Activated CD4-positive, alpha-beta T cell treated with anti-CD3 and anti-CD28 coated beads for 36 hours (primary cell): ENCODE measurements at regions of chr17 and their contacts with region 1.

Region 1: DNA sequence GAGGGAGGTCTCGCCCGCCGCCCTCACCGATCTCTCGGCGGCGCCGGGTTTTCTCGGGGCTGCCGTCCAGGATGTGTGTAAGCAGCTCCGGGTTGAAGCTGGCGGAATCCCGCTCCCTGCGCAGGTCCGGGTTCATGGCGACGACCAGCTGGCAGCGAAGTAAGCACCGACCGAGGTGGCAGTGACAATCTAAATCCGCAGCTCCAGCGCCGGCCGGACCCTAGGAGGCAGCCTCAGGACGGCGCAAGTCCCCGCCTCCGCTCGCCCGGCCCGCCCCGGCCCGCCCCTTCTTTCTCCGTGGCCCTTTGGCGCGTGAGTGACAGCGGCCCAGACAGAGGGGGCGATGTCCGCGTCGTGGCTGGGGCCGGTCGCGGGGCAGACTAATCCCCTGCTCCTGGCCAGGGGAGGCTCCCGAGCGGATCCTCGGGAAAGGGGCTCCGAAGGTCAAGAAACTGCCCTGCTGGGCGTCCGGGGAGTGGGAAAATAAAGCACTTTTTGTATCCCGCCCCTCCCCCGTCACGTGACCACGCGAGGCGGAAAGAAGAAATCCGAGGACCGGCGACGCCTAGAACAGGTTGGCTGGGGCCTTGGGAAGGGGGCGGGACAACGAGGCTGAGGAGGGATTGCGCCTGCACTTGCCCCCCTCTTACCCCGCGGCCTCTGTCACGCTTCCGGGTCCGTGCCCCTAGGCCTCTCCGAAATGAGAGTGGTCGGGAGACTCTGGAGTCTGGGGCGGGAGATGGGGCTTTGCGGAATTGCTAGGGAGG is at the starts of genes ACOX1 and TEN1:
- DNase-seq: peak; percentile 98
- ATAC-seq: peak; percentile 96
- H3K4me3 Mint-ChIP-seq: peak within 1 kb of the TSS; percentile 89
- H3K27ac Mint-ChIP-seq: peak within 1 kb of the TSS; percentile 94
- H3K4me1 Mint-ChIP-seq: peaks cover 30% of the 10 kb centered on the region
- H3K27me3 Mint-ChIP-seq: no peaks in the 10 kb centered on the region
- total RNA-seq, gene ACOX1: 27.7 to 33.1 TPM
- total RNA-seq, gene TEN1: 9.8 to 13.6 TPM

Region 2: DNA sequence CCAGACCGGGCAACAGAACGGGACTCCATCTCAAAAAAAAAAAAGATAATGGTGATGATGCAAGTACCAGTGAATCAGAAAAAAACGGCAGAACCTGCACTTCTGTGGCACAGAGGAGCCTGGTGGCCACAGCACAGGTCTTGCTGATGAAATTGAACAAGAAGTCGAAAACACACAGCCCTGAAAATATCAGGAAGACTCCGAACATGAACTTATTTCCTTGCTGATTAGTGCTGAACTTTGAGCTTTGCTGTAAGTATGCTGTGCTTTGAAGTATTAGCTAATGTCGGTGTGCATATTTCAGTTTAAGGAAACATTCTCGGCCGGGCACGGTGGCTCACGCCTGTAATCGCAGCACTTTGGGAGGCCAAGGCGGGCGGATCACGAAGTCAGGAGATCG is 402.5 kb before region 1 on chr17:
- CTCF ChIA-PET with region 1: no interaction called
- POLR2A ChIA-PET with region 1: no interaction called
- intact Hi-C with region 1: loop called in 1 of 2 experiments (anchors 1 kb)
- DNase-seq: no peak
- ATAC-seq: no peak
- H3K4me3 Mint-ChIP-seq: no peak overlapping the region
- H3K27ac Mint-ChIP-seq: no peak overlapping the region
- H3K4me1 Mint-ChIP-seq: peaks cover 8% of the 10 kb centered on the region
- H3K27me3 Mint-ChIP-seq: peaks cover 2% of the 10 kb centered on the region

Region 3: GRCh38 chr17:75795820-75796607 is 183.1 kb before region 1 on chr17:
- CTCF ChIA-PET with region 1: no interaction called
- POLR2A ChIA-PET with region 1: no interaction called
- intact Hi-C with region 1: no loop called
- DNase-seq: no peak
- ATAC-seq: no peak
- H3K4me3 Mint-ChIP-seq: no peak overlapping the region
- H3K27ac Mint-ChIP-seq: no peak overlapping the region
- H3K4me1 Mint-ChIP-seq: peaks cover 20% of the 10 kb centered on the region
- H3K27me3 Mint-ChIP-seq: no peaks in the 10 kb centered on the region

Region 4: GRCh38 chr17:75896415-75897159 is 82.5 kb before region 1 on chr17 and contains the start of gene TRIM65:
- CTCF ChIA-PET with region 1: no interaction called
- POLR2A ChIA-PET with region 1: no interaction called
- intact Hi-C with region 1: loop called in 1 of 2 experiments (anchors 2 kb)
- DNase-seq: peak; percentile 86
- ATAC-seq: peak; percentile 85
- H3K4me3 Mint-ChIP-seq: peak within 1 kb of the TSS; percentile 84
- H3K27ac Mint-ChIP-seq: peak within 1 kb of the TSS; percentile 72
- H3K4me1 Mint-ChIP-seq: peaks cover 19% of the 10 kb centered on the region
- H3K27me3 Mint-ChIP-seq: no peaks in the 10 kb centered on the region
- total RNA-seq, gene TRIM65: 28.9 to 31.9 TPM

Region 5: DNA sequence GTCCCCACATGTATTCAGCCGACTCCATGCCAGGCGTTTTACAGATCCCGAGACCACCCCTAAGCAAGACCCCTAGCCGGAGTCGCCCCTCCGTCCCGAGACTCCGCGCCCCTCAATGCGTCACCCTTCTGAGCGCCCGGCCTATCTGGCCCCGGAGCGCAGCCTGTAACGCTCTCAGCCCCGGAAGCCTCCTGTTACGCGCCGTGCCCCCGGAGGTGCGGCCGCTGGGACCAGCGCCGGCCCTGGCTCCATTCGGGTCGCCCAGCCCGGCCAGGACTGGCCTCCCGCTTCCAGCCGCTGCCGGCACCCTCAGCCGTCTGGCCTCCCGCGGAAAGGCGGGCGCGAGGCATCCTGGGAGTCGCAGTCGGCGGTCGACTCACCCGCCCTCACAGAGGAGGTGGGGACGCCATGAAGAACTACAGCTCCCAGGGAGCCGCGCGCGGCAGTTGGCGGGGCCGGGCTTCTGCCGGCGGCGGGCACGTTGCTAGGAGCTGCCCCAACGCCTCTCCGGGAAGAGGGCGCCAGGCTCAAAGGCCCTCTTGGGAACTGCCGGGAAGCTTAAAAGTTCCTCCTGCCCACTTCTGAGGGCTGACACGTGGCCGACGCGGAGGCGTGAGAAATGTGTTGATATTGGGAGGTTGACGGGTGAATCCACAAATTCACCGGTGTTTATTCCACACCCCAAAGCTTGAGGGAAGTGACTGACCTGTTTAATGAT is 38.2 kb before region 1 on chr17 and contains the start of gene FBF1:
- CTCF ChIA-PET with region 1: no interaction called
- POLR2A ChIA-PET with region 1: no interaction called
- intact Hi-C with region 1: loop called (anchors 1 to 2 kb)
- DNase-seq: peak; percentile 94
- ATAC-seq: peak; percentile 100
- H3K4me3 Mint-ChIP-seq: peak within 1 kb of the TSS; percentile 92
- H3K27ac Mint-ChIP-seq: peak within 1 kb of the TSS; percentile 82
- H3K4me1 Mint-ChIP-seq: peaks cover 13% of the 10 kb centered on the region
- H3K27me3 Mint-ChIP-seq: no peaks in the 10 kb centered on the region
- total RNA-seq, gene FBF1: 16.2 to 18.0 TPM

Region 6: GRCh38 chr17:76103274-76104139 is 124.4 kb after region 1 on chr17 and contains the start of gene EXOC7:
- CTCF ChIA-PET with region 1: no interaction called
- POLR2A ChIA-PET with region 1: no interaction called
- intact Hi-C with region 1: loop called in 1 of 2 experiments (anchors 1 kb)
- DNase-seq: peak; percentile 96
- ATAC-seq: peak; percentile 94
- H3K4me3 Mint-ChIP-seq: peak within 1 kb of the TSS; percentile 90
- H3K27ac Mint-ChIP-seq: peak within 1 kb of the TSS; percentile 93
- H3K4me1 Mint-ChIP-seq: peaks cover 18% of the 10 kb centered on the region
- H3K27me3 Mint-ChIP-seq: no peaks in the 10 kb centered on the region
- total RNA-seq, gene EXOC7: 73.0 to 77.0 TPM

Region 7: DNA sequence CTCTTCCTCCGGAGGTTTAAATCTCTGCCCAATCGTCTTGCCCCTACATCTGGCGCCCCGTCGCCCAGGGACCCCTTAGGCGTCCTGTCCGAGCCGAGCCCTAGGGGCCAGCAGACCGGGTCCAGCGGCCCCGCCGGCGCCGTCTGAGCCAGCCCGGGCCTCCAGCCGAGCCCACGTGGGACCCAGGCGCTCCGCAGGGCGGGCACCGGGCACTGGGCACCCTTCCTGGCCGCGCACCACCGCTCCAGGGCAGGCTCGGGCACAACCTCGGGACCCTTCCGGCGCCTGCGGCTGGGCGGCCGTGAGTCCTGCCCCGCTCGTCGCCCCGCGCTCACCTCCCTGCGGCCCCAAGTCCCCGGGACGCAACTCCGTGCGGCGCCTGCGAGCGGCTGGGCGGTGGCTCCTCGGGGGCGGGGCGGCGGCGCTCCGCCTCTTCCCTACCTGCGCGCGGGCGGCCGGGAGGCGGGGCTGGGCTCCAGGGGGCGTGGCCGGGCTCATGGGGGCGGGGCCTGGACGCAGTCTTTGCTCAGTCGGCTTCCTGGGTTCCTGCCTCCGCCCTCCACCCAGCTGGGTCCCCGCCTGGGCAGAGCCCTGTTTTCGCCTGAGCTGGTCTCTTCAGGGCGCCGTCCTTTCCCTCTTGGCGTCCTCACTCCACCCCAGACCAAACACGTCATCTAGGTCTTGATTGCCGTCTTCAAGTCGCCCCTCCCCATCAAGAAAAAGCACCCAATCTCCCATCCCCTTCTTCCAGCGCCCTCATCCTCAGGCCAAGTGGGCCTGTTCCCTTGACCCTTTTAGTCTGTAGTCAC is 522.1 kb after region 1 on chr17 and contains the start of gene RHBDF2:
- CTCF ChIA-PET with region 1: no interaction called
- POLR2A ChIA-PET with region 1: no interaction called
- intact Hi-C with region 1: loop called in 1 of 2 experiments (anchors 1 kb)
- DNase-seq: peak; percentile 98
- ATAC-seq: peak; percentile 91
- H3K4me3 Mint-ChIP-seq: peak within 1 kb of the TSS; percentile 87
- H3K27ac Mint-ChIP-seq: peak within 1 kb of the TSS; percentile 94
- H3K4me1 Mint-ChIP-seq: peaks cover 29% of the 10 kb centered on the region
- H3K27me3 Mint-ChIP-seq: no peaks in the 10 kb centered on the region
- total RNA-seq, gene RHBDF2: 23.9 to 28.4 TPM